ENCODE measurements at regions of chr6 and their contacts with region 1.

Region 1: GRCh38 chr6:29752451-29753308 is 29.4 kb downstream of the HLA-F start:
- DNase-seq: peak; percentile 65 to 81
- ATAC-seq: peak; percentile 79 to 85
- H3K4me3 ChIP-seq: peak overlapping the region; percentile 55 to 77 (median 72)
- H3K27ac ChIP-seq: peak overlapping the region; percentile 67 to 87 (median 84)
- H3K4me1 ChIP-seq: peaks cover 8 to 17% of the 10 kb centered on the region in 2 donors
- H3K27me3 ChIP-seq: peaks cover 0 to 8% (median 5%) of the 10 kb centered on the region in 3 donors
- CTCF ChIP-seq: peak; percentile 78 to 96 (median 91)
- POLR2A ChIP-seq: peak; percentile 31 to 46

Region 2: GRCh38 chr6:29649701-29650673 is 102.7 kb before region 1 on chr6:
- in situ Hi-C with region 1: no loop called
- intact Hi-C with region 1: loop called (anchors 1 kb)
- DNase-seq: peak; percentile 95 to 97
- ATAC-seq: peak; percentile 99 to 100
- H3K4me3 ChIP-seq: peak overlapping the region; percentile 65 to 73 (median 69)
- H3K27ac ChIP-seq: peak overlapping the region; percentile 86 to 98 (median 91)
- H3K4me1 ChIP-seq: peaks cover 0 to 3% of the 10 kb centered on the region in 2 donors
- H3K27me3 ChIP-seq: no peaks in the 10 kb centered on the region
- CTCF ChIP-seq: peak; percentile 84 to 94 (median 89)
- POLR2A ChIP-seq: peak; percentile 70 to 95

Region 3: DNA sequence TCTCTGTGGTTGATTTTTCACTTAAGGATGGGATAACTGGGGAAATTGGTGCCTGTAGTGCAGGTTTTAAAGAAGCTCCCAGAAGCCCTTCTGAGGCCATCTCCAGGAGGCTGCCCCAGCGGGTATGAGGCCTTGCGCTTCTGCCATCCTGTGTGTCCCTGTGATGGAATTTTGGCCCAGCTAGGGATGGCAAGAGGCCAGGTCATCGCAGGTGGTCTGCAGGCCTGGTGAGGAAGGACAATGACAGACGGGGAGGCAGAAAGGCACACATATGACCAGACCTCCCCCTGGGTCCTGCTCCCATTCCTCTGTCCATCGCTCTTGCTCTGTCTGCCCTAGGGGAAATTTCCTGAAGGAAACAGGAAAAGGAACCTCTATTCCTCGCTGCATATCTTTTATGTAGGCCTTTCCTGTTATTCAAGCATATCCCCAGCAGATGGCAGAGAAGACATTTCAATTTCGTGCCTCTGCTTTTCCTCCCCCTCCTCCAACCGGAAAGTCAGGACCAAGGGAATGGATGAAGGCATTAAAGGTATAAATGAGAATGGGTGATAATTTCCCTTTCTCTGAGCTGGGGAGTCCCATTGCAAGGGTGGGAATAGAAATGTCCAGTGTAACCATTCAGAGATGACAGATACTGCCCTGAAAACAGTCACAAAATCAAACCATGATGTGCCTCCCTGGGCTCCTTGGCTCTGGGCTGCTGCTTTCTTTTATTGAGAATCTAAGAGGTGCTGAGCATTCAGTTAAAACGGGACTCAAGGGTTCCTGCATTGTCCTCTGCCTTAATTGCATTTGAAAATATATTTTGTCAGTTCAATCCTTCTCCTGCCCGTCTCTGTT is 47.1 kb before region 1 on chr6:
- in situ Hi-C with region 1: no loop called
- intact Hi-C with region 1: loop called (anchors 2 kb)
- DNase-seq: no peak
- ATAC-seq: no peak
- H3K4me3 ChIP-seq: no peak overlapping the region
- H3K27ac ChIP-seq: no peak overlapping the region
- H3K4me1 ChIP-seq: no peaks in the 10 kb centered on the region
- H3K27me3 ChIP-seq: peaks cover 0 to 9% (median 8%) of the 10 kb centered on the region in 3 donors
- CTCF ChIP-seq: peak in 4 of 5 experiments; percentile 18 to 58 (median 40)
- POLR2A ChIP-seq: no peak

Region 4: DNA sequence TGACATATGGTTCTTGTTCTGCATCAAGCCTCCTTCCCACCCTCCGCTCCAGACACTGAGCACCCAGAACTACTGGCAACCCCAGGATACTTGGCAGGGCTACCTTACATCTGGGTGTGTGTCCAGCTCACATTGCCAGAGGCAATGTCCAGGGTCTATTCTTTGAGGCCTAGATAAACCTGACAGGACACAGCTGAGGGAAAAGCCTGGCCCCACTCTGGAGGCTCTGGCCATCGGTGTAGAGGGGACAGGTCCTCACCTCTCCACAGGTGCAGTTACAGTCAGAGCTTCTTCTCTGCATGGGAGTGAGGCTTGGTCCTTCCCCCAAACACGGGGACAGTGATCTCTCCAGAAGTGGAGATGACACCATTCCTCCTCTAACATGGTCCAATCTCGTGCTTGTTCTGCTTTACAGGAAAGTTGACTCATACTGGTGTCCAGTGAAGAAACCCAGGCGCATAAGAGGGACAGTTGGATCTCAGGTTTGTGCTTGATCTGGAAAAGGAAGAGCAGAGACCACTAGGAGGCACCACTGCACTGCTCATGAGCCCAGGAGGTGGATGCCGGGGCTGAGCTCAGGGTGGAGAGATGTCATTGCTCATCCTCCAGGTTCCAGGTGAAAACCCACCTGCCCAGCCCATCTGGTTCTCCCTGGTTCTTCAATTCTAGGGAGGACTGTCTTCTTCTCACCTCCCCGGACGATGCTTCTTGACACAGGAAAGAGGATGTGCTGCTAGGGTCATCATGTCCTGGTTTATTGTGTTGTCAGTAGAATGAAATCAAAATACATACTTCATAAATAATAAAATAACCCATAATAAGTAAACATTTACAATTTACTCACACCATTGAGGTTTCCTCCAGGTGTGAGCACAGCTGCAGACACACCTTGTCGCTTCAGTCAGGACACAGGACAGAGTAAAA is 14.7 kb before region 1 on chr6:
- in situ Hi-C with region 1: no loop called
- intact Hi-C with region 1: loop called (anchors 1 kb)
- DNase-seq: peak; percentile 27 to 48
- ATAC-seq: peak in 1 of 2 donors; percentile 78
- H3K4me3 ChIP-seq: no peak overlapping the region
- H3K27ac ChIP-seq: no peak overlapping the region
- H3K4me1 ChIP-seq: no peaks in the 10 kb centered on the region
- H3K27me3 ChIP-seq: no peaks in the 10 kb centered on the region
- CTCF ChIP-seq: peak; percentile 49 to 68 (median 60)
- POLR2A ChIP-seq: no peak

Region 5: DNA sequence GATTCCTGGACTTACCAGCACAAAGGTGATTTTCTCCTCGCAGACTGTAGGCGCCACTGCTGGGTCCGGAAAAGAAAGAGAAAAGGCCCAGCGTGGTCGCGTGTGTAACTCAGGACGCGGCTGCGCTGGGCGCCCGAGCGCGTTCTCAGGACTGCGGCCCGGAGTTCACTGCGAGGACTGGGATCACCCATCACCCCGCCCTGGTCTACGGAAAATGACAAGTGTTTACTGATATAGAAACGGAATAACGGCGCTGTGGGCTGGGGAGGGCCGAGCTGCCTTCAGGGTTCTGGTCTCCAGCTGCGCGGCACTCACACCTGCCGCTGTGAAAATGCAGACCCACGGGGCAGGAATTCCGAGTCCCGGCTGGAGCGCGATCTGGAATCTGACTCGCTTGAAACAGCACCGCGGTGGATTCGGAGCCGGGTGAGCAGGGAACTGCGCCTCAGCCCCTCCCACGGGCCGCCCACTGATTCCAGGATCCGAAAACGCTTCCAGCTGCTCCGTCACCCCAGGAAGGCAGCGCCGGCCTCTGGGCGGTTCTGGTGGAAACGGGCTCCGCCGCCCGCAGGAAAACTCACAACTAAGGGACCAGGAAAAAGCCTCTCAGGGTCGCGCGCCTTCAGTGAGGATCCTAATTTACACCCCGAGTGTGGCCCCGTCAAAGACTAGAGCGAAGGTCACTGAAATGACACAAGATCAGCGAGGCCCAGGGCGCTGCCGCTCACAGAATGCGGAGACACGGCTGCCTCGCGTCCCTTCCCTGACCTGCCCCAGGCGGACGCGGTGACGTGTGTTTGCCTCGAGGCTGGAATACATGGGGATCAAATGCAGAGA is 224.1 kb after region 1 on chr6:
- in situ Hi-C with region 1: loop called in 1 of 4 experiments (anchors 25 kb)
- intact Hi-C with region 1: no loop called
- DNase-seq: peak; percentile 61 to 77
- ATAC-seq: peak; percentile 89 to 91
- H3K4me3 ChIP-seq: peak overlapping the region; percentile 58 to 80 (median 71)
- H3K27ac ChIP-seq: peak overlapping the region; percentile 88 to 97 (median 92)
- H3K4me1 ChIP-seq: peaks cover 7 to 19% of the 10 kb centered on the region in 2 donors
- H3K27me3 ChIP-seq: no peaks in the 10 kb centered on the region
- CTCF ChIP-seq: peak; percentile 4 to 37 (median 27)
- POLR2A ChIP-seq: peak; percentile 35 to 71

Region 6: DNA sequence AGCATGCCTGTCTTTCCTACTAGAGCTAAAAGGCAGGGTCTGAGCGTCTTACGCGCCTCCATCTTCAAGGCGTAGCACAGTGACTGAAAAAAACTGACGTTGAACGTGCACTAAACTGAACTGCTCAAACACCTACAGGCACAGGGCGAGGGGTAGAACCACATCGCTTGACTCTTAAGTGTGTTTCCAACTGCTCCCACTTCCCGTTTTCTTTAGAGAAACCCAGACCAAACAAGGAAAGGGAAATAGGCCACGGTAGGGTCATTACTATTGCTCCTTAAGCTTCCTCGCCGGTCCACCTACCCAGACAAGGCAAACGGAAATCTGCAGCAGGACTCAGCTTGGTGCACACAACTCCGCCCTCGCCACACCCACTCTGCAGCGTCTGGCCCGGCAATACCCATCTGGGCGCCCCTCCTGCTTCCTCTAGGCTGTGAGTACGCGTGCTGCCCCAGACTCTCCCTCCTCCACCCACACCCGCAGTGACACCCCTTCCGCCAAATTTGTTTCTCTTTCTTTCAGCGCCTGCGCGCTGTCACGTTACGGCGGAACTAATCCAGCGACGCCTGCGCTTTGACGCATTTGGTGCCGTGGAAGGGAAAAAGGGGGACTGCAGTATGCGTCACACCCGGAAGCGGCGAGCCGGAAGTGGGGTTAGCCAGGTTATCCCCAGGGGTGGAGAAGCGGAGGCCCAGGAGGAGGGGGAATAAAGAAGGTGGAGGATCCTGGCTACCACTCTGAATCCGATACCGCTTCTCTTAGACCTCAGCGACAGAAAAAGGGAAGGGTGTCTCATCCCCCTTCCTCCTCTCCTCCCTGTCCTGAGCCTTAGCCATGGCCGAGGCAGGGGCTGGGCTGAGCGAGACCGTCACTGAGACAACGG is 314.1 kb after region 1 on chr6 and contains the start of gene PPP1R11:
- in situ Hi-C with region 1: no loop called
- intact Hi-C with region 1: loop called (anchors 5 kb)
- DNase-seq: peak; percentile 97 to 98
- ATAC-seq: peak; percentile 95 to 96
- H3K4me3 ChIP-seq: peak within 1 kb of the TSS; percentile 79 to 95 (median 86)
- H3K27ac ChIP-seq: peak within 1 kb of the TSS; percentile 85 to 93 (median 90)
- H3K4me1 ChIP-seq: peaks cover 29 to 33% of the 10 kb centered on the region in 2 donors
- H3K27me3 ChIP-seq: peaks cover 9 to 16% (median 10%) of the 10 kb centered on the region in 3 donors
- CTCF ChIP-seq: peak in 1 of 5 experiments; percentile 8
- POLR2A ChIP-seq: peak; percentile 57 to 80
- total RNA-seq, gene PPP1R11: 34.0 to 72.4 (median 49.9) TPM

Measured in gastrocnemius medialis (tissue), 4 donors.